SK-N-SH (cell line): ENCODE measurements at regions of chr5 and their contacts with region 1.

Region 1: GRCh38 chr5:32489791-32490582 is 45.4 kb upstream of the ZFR start:
- DNase-seq: peak; percentile 80
- H3K4me3 ChIP-seq: peak overlapping the region in 1 of 2 experiments; percentile 18; a peak in 1 of 4 replicates
- H3K27ac ChIP-seq: peak overlapping the region; percentile 36 to 62; a peak in 3 of 4 replicates
- H3K4me1 ChIP-seq: peaks cover 5 to 7% of the 10 kb centered on the region in 2 experiments; a peak in 3 of 4 replicates
- H3K27me3 ChIP-seq: no peaks in the 10 kb centered on the region
- CTCF ChIP-seq: peak; percentile 82
- EP300 ChIP-seq: peak in 1 of 2 experiments; percentile 80; a peak in 3 of 4 replicates
- RAD21 ChIP-seq: peak; percentile 91

Region 2: GRCh38 chr5:32182463-32183081 is 307.4 kb before region 1 on chr5:
- CTCF ChIA-PET with region 1: no interaction called
- POLR2A ChIA-PET with region 1: no interaction called
- DNase-seq: no peak
- H3K4me3 ChIP-seq: no peak overlapping the region
- H3K27ac ChIP-seq: no peak overlapping the region
- H3K4me1 ChIP-seq: no peaks in the 10 kb centered on the region
- H3K27me3 ChIP-seq: no peaks in the 10 kb centered on the region
- CTCF ChIP-seq: no peak
- EP300 ChIP-seq: no peak
- RAD21 ChIP-seq: no peak

Region 3: DNA sequence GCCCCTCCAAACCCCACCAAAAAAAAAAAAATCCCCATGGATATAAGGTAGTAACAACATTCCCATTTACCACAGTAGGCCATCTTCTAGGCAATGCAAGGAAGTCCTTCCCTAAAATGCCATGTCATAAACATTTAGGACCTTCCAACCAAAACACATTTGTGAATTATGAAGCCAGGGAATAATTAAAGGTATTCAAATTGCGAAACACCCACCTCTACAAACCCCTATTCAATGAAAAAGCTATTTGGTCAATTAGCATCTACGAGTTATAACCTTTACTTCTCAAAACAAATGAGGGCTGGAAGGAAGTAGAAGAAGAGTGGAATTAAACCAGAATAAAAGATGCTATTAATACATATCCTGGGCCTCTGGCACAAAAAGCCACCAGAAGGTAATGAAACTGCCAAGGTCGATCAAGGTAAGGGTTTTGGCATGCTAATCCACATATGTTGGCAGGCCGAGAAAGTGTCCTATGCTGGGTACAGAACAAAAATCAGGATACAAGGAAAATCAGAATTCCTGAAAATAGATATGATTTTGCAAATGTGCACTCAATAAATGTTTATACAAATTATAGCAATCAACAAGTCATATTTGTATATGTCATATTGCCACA is 224.9 kb before region 1 on chr5:
- CTCF ChIA-PET with region 1: no interaction called
- POLR2A ChIA-PET with region 1: no interaction called
- DNase-seq: no peak
- H3K4me3 ChIP-seq: no peak overlapping the region
- H3K27ac ChIP-seq: no peak overlapping the region
- H3K4me1 ChIP-seq: no peaks in the 10 kb centered on the region
- H3K27me3 ChIP-seq: no peaks in the 10 kb centered on the region
- CTCF ChIP-seq: no peak
- EP300 ChIP-seq: no peak
- RAD21 ChIP-seq: no peak

Region 4: GRCh38 chr5:32476891-32477290 is 13.1 kb before region 1 on chr5:
- CTCF ChIA-PET with region 1: interaction called, 11 read pairs
- POLR2A ChIA-PET with region 1: no interaction called
- DNase-seq: no peak
- H3K4me3 ChIP-seq: no peak overlapping the region
- H3K27ac ChIP-seq: no peak overlapping the region
- H3K4me1 ChIP-seq: no peaks in the 10 kb centered on the region
- H3K27me3 ChIP-seq: no peaks in the 10 kb centered on the region; the same call in 1 of the 2 replicates
- CTCF ChIP-seq: no peak
- EP300 ChIP-seq: no peak
- RAD21 ChIP-seq: no peak

Region 5: DNA sequence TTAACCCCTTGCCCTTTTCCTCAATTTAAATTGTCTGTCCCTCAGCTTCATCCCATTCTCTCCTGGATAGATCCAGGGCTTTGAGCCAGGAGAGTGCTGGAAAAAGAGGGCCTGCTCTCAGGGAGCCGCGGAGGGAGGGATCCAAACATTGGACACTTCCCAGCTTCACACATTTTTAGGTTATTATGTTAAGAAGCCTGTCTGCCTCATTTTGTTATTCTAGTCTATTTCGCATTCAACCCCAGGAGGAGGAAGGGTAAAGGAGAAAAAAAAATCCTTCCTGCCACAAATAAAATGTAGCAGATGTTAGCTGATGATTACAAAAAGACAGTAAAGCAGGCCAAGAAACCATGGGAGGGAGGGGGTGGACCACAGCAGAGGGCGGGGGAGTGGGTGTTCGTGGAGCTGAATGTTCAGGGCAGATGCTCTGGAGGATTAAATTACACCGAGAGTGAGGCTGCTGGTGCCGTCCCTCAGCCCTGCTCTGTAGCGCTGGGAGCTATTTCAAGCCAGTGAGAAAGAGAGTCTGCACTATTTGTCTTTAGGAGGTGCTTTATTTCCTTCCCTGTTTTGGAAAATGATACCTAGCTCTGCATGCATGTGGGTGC is 15.1 kb after region 1 on chr5:
- CTCF ChIA-PET with region 1: interaction called, 34 read pairs
- POLR2A ChIA-PET with region 1: interaction called, 4 read pairs
- DNase-seq: peak; percentile 86
- H3K4me3 ChIP-seq: peak overlapping the region; percentile 28 to 45
- H3K27ac ChIP-seq: peak overlapping the region; percentile 87 to 93
- H3K4me1 ChIP-seq: peaks cover 30 to 32% of the 10 kb centered on the region in 2 experiments
- H3K27me3 ChIP-seq: no peaks in the 10 kb centered on the region
- CTCF ChIP-seq: no peak
- EP300 ChIP-seq: peak in 1 of 2 experiments; percentile 77; a peak in 2 of 4 replicates
- RAD21 ChIP-seq: no peak

Region 6: GRCh38 chr5:32595118-32595517 is 105.1 kb after region 1 on chr5:
- CTCF ChIA-PET with region 1: interaction called, 183 read pairs
- POLR2A ChIA-PET with region 1: interaction called, 7 read pairs
- DNase-seq: no peak
- H3K4me3 ChIP-seq: no peak overlapping the region
- H3K27ac ChIP-seq: no peak overlapping the region; a peak in 1 of 4 replicates
- H3K4me1 ChIP-seq: peaks cover 0 to 29% of the 10 kb centered on the region in 2 experiments; a peak in 2 of 4 replicates
- H3K27me3 ChIP-seq: no peaks in the 10 kb centered on the region
- CTCF ChIP-seq: no peak
- EP300 ChIP-seq: no peak
- RAD21 ChIP-seq: no peak

Region 7: GRCh38 chr5:32600057-32600622 is 110.2 kb after region 1 on chr5:
- CTCF ChIA-PET with region 1: interaction called, 11 read pairs
- POLR2A ChIA-PET with region 1: no interaction called
- DNase-seq: no peak
- H3K4me3 ChIP-seq: no peak overlapping the region
- H3K27ac ChIP-seq: peak overlapping the region; percentile 81 to 82; a peak in 3 of 4 replicates
- H3K4me1 ChIP-seq: peaks cover 0 to 30% of the 10 kb centered on the region in 2 experiments; a peak in 3 of 4 replicates
- H3K27me3 ChIP-seq: no peaks in the 10 kb centered on the region
- CTCF ChIP-seq: no peak
- EP300 ChIP-seq: peak; percentile 50 to 89; a peak in 3 of 4 replicates
- RAD21 ChIP-seq: no peak

Region 8: DNA sequence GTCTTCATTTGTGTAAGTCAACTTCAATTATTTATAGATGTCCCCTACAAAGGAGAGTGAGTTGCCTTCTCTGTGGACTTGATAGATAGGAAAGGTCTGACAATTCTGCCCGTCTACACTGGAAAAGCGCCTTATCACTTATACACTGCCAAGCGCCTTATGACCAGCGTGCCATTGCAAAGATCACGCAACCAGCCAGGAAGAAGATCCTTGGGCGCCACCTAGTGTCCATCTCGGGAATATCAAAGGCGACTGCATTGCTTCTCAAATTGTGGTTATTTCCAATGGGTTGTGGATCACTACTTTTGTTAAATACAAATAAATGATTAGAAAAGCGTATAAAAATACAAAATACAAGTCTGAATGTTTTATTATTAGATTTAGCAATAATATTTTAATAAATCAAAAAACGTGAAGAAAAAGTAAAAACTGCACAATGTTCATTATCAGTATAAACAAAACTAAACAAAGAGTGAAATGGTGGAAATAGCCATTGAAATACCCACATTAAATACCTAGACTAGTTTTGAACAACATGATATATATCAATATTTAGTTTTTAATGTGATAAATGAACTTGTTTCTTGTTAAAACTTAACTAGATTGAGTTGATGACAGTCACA is 123.2 kb after region 1 on chr5:
- CTCF ChIA-PET with region 1: interaction called, 27 read pairs
- POLR2A ChIA-PET with region 1: interaction called, 3 read pairs
- DNase-seq: peak; percentile 75
- H3K4me3 ChIP-seq: peak overlapping the region in 1 of 2 experiments; percentile 20; a peak in 1 of 4 replicates
- H3K27ac ChIP-seq: 0 out of 4 replicates have a peak overlapping the region, but pooled peaks of 1 of the 2 experiments have one; percentile 6
- H3K4me1 ChIP-seq: peaks cover 0 to 3% of the 10 kb centered on the region in 2 experiments; a peak in 2 of 4 replicates
- H3K27me3 ChIP-seq: no peaks in the 10 kb centered on the region
- CTCF ChIP-seq: peak; percentile 94
- EP300 ChIP-seq: no peak
- RAD21 ChIP-seq: peak; percentile 95